ENCODE measurements at regions of chr17 and their contacts with region 1.

Region 1: DNA sequence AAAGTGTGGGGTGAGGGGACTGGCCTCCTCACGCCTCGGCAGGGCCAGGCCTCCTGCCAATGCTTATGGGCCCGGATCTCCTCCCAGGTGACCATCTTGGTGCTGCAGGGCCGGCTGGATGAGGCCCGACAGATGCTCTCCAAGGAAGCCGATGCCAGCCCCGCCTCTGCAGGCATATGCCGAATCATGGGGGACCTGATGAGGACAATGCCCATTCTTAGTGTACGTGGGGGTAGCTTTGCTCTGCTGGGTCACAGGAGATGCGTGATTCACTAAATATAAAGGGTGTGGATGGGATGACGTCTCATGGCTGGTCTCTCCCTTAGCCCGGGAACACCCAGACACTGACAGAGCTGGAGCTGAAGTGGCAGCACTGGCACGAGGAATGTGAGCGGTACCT is 19.5 kb downstream of the NUP85 start:
- DNase-seq: no peak
- ATAC-seq: no peak
- H3K4me3 ChIP-seq: no peak overlapping the region
- H3K4me3 Mint-ChIP-seq: no peak overlapping the region
- H3K27ac ChIP-seq: no peak overlapping the region
- H3K27ac Mint-ChIP-seq: no peak overlapping the region
- H3K4me1 ChIP-seq: no peaks in the 10 kb centered on the region
- H3K4me1 Mint-ChIP-seq: peaks cover 0 to 3% (median 0%) of the 10 kb centered on the region in 3 donors
- H3K27me3 ChIP-seq: no peaks in the 10 kb centered on the region
- H3K27me3 Mint-ChIP-seq: no peaks in the 10 kb centered on the region

Region 2: DNA sequence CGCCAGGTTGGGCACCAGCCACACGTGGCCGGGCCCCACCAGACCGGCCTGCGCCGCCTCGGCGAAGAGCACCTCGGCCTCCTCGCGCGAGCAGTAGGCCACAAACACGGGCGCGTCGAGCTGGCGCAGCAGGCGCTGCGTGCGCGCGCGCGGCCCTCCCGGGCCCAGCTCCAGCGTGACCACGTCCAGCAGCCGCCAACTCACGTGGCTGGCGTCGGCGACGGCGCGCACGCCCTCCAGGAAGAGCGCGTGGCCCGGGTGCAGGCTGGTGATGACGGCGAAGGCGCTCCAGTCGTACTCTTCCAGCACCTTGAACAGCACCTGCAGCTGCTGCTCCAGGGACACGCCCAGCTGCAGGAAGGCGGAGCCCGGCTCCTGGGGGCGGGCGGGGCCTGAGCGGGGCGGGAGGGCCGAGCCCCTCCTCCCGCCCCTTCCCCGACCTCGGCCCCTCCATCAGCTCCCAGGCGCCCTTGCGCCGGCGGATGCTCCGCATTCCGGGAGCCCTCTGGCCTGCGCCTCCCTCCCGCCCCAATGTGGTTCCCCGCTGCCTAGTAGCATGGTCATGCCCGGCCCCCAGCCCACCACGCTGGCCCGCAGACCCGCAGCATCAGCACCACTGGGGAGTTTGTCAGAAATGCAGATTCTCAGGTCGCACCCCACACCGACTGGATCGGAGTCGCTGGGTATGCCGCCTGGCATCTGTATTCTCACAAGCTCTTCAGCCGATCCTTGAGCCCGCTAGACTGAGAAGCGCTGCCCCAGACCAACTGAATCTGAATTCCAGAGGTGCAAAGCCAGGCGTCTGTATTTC is 372.6 kb before region 1 on chr17:
- CTCF ChIA-PET with region 1: no interaction called
- POLR2A ChIA-PET with region 1: no interaction called
- DNase-seq: peak in 34 of 35 experiments; percentile 21 to 82 (median 50)
- ATAC-seq: peak; percentile 90 to 92 (median 90)
- H3K4me3 ChIP-seq: peak overlapping the region; percentile 39 to 47
- H3K4me3 Mint-ChIP-seq: peak overlapping the region; percentile 66 to 75 (median 70)
- H3K27ac ChIP-seq: no peak overlapping the region
- H3K27ac Mint-ChIP-seq: peak overlapping the region in 1 of 2 donors; percentile 11
- H3K4me1 ChIP-seq: peaks cover 0 to 15% of the 10 kb centered on the region in 2 experiments
- H3K4me1 Mint-ChIP-seq: peaks cover 10 to 18% (median 12%) of the 10 kb centered on the region in 3 donors
- H3K27me3 ChIP-seq: peaks cover 9 to 75% of the 10 kb centered on the region in 2 experiments
- H3K27me3 Mint-ChIP-seq: peaks cover 40 to 53% of the 10 kb centered on the region in 2 donors

Region 3: GRCh38 chr17:74998783-74999182 is 226.2 kb before region 1 on chr17:
- CTCF ChIA-PET with region 1: no interaction called
- POLR2A ChIA-PET with region 1: interaction called in 1 of 2 experiments, 11 read pairs
- DNase-seq: no peak
- ATAC-seq: no peak
- H3K4me3 ChIP-seq: no peak overlapping the region
- H3K4me3 Mint-ChIP-seq: no peak overlapping the region
- H3K27ac ChIP-seq: no peak overlapping the region
- H3K27ac Mint-ChIP-seq: no peak overlapping the region
- H3K4me1 ChIP-seq: no peaks in the 10 kb centered on the region
- H3K4me1 Mint-ChIP-seq: peaks cover 6 to 13% (median 7%) of the 10 kb centered on the region in 3 donors
- H3K27me3 ChIP-seq: peaks cover 0 to 4% of the 10 kb centered on the region in 2 experiments
- H3K27me3 Mint-ChIP-seq: no peaks in the 10 kb centered on the region

Region 4: GRCh38 chr17:75707131-75707571 is 482.1 kb after region 1 on chr17:
- CTCF ChIA-PET with region 1: no interaction called
- POLR2A ChIA-PET with region 1: no interaction called
- DNase-seq: no peak
- ATAC-seq: no peak
- H3K4me3 ChIP-seq: no peak overlapping the region
- H3K4me3 Mint-ChIP-seq: no peak overlapping the region
- H3K27ac ChIP-seq: no peak overlapping the region
- H3K27ac Mint-ChIP-seq: no peak overlapping the region
- H3K4me1 ChIP-seq: no peaks in the 10 kb centered on the region
- H3K4me1 Mint-ChIP-seq: no peaks in the 10 kb centered on the region
- H3K27me3 ChIP-seq: no peaks in the 10 kb centered on the region
- H3K27me3 Mint-ChIP-seq: no peaks in the 10 kb centered on the region

Measured in T-cell (primary cell).